ENCODE measurements at regions of chr16 and their contacts with region 1.

Region 1: GRCh38 chr16:64952177-64952576 is 169.7 kb downstream of the CDH11 start:
- DNase-seq: peak; percentile 97
- ATAC-seq: peak; percentile 90
- H3K4me3 ChIP-seq: no peak overlapping the region
- H3K27ac ChIP-seq: no peak overlapping the region
- H3K4me1 ChIP-seq: peaks cover 11% of the 10 kb centered on the region
- H3K27me3 ChIP-seq: no peaks in the 10 kb centered on the region
- CTCF ChIP-seq: no peak
- POLR2A ChIP-seq: no peak
- RAD21 ChIP-seq: no peak

Region 2: GRCh38 chr16:64089697-64090096 is 862.5 kb before region 1 on chr16:
- CTCF ChIA-PET with region 1: no interaction called
- POLR2A ChIA-PET with region 1: no interaction called
- dilution Hi-C with region 1: no loop called
- in situ Hi-C with region 1: no loop called
- intact Hi-C with region 1: loop called (anchors 10 kb)
- DNase-seq: peak; percentile 11
- ATAC-seq: peak; percentile 65; the same call in 1 of the 2 replicates
- H3K4me3 ChIP-seq: no peak overlapping the region
- H3K27ac ChIP-seq: no peak overlapping the region
- H3K4me1 ChIP-seq: peaks cover 4% of the 10 kb centered on the region; the same call in 1 of the 2 replicates
- H3K27me3 ChIP-seq: no peaks in the 10 kb centered on the region
- CTCF ChIP-seq: peak; percentile 47
- POLR2A ChIP-seq: no peak
- RAD21 ChIP-seq: peak; percentile 51